ENCODE measurements at regions of chr22 and their contacts with region 1.

Region 1: GRCh38 chr22:16949561-16949960 is 58.5 kb downstream of the GAB4 start:
- DNase-seq: peak; percentile 71
- H3K4me3 Mint-ChIP-seq: no peak overlapping the region
- H3K27ac Mint-ChIP-seq: no peak overlapping the region
- H3K4me1 Mint-ChIP-seq: peaks cover 14% of the 10 kb centered on the region
- H3K27me3 Mint-ChIP-seq: peaks cover 2% of the 10 kb centered on the region

Region 2: DNA sequence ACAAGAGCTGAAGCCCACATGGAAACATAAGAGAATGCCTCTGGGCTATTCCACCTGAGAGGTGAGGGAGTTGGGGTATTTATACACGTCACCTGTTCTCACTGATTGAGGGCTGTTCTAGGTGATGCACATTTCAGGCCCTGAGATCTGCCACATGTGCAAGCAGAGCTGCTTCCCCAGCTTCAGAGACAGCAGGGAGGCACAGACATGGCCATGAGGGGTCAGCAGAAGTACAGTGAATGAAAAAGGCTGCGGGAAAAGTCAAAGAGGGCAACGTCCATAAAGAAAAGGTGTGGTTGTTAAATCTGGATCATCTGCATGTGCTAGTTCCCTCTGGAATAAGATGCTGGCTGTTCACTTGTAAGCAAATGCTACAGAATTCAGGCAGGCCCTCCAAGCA is 17.0 kb before region 1 on chr22:
- CTCF ChIA-PET with region 1: no interaction called
- intact Hi-C with region 1: loop called (anchors 2 kb)
- DNase-seq: peak; percentile 13
- H3K4me3 Mint-ChIP-seq: no peak overlapping the region
- H3K27ac Mint-ChIP-seq: no peak overlapping the region
- H3K4me1 Mint-ChIP-seq: peaks cover 3% of the 10 kb centered on the region
- H3K27me3 Mint-ChIP-seq: peaks cover 30% of the 10 kb centered on the region

Region 3: DNA sequence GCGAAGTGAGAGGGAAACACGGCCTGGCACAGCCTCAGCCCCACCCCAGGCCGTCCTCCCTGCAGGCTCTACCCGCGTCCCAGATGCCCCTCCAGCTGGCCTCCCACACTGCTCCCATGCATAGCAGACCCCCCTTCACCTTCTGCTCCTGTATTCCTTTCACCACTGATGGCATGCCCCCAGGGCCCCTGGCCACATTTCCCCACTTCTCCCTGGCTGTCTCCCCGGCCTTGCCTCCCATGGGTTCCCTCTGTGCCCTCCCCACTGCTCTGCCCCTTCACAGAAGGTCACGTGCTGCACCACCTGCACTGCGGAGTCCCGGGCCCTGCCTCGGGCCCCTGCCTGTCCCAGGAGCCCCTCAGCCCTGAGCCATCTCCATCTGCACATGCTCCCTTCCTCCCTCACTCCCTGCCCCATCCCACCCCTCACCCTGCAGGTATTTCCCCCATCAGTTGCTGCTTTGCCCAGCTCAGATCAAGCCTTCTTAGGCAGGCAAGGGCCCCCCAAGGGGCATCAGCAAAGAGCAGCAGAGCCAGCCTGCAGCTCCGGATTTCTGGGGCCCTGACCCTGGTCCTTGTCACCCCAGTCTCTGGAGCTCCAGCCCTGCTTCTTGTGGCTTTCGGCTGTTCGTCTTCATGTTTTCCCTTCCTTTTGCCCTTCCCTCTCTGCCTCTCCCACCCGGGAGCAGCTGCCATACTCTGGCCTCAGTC is 12.1 kb after region 1 on chr22:
- CTCF ChIA-PET with region 1: no interaction called
- intact Hi-C with region 1: no loop called
- DNase-seq: no peak
- H3K4me3 Mint-ChIP-seq: no peak overlapping the region
- H3K27ac Mint-ChIP-seq: no peak overlapping the region
- H3K4me1 Mint-ChIP-seq: no peaks in the 10 kb centered on the region
- H3K27me3 Mint-ChIP-seq: no peaks in the 10 kb centered on the region

Region 4: GRCh38 chr22:16989915-16990314 is 40.4 kb after region 1 on chr22:
- CTCF ChIA-PET with region 1: no interaction called
- intact Hi-C with region 1: no loop called
- DNase-seq: no peak
- H3K4me3 Mint-ChIP-seq: no peak overlapping the region
- H3K27ac Mint-ChIP-seq: no peak overlapping the region
- H3K4me1 Mint-ChIP-seq: no peaks in the 10 kb centered on the region
- H3K27me3 Mint-ChIP-seq: peaks cover 8% of the 10 kb centered on the region